Activated CD4-positive, alpha-beta T cell treated with anti-CD3 and anti-CD28 coated beads for 36 hours (primary cell): ENCODE measurements at regions of chr4 and their contacts with region 1.

Region 1: GRCh38 chr4:56445699-56446098 is 9.6 kb downstream of the PAICS start:
- DNase-seq: no peak
- ATAC-seq: no peak
- H3K4me3 Mint-ChIP-seq: no peak overlapping the region
- H3K27ac Mint-ChIP-seq: no peak overlapping the region
- H3K4me1 Mint-ChIP-seq: peaks cover 37% of the 10 kb centered on the region
- H3K27me3 Mint-ChIP-seq: no peaks in the 10 kb centered on the region

Region 2: DNA sequence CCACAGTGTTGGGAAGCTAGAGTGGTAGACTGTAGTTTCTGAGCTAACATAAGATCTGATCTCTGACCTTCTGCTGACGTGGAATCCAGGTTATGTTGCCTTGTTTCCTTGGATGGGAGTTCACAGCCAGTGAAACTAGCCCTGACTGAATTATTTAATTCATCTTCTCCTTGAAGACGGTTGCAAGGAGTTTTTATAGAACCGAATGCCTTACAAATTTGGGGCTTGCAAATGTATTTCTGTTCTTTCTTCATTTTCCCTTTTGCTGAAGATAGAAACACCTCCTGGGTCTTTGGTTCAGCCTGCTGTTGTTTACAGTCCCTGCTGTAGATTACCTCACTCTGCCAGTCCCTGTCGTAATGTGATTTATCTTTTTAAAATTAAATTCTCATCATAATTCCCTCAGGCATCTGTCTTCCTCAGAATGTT is 383.1 kb before region 1 on chr4:
- CTCF ChIA-PET with region 1: no interaction called
- POLR2A ChIA-PET with region 1: no interaction called
- intact Hi-C with region 1: no loop called
- DNase-seq: no peak
- ATAC-seq: no peak
- H3K4me3 Mint-ChIP-seq: no peak overlapping the region
- H3K27ac Mint-ChIP-seq: no peak overlapping the region
- H3K4me1 Mint-ChIP-seq: no peaks in the 10 kb centered on the region
- H3K27me3 Mint-ChIP-seq: peaks cover 16% of the 10 kb centered on the region

Region 3: DNA sequence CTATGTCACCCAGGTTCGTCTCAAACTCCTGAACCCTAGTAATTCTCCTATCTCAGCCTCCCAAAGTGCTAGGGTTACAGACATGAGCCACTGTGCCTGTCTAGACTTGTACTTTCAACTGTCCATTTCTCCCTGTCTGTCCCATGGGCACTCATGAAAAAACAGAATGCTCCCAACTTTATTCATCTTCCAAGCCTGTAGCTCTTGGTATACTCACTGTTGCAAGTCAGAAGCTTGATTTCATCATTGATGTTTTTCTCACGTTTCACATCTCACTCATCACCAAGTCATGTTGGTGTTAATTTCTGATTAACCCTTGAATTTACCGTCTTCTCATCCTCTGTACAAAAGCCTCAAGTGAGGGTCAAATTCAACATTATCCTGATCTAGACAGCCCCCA is 14.4 kb after region 1 on chr4:
- CTCF ChIA-PET with region 1: interaction called, 10 read pairs
- POLR2A ChIA-PET with region 1: interaction called, 3 read pairs
- intact Hi-C with region 1: no loop called
- DNase-seq: no peak
- ATAC-seq: no peak
- H3K4me3 Mint-ChIP-seq: no peak overlapping the region
- H3K27ac Mint-ChIP-seq: peak overlapping the region; percentile 93
- H3K4me1 Mint-ChIP-seq: peaks cover 37% of the 10 kb centered on the region
- H3K27me3 Mint-ChIP-seq: no peaks in the 10 kb centered on the region

Region 4: GRCh38 chr4:56480691-56481090 is 35.0 kb after region 1 on chr4:
- CTCF ChIA-PET with region 1: no interaction called
- POLR2A ChIA-PET with region 1: no interaction called
- intact Hi-C with region 1: loop called in 1 of 2 experiments (anchors 5 kb)
- DNase-seq: no peak
- ATAC-seq: no peak
- H3K4me3 Mint-ChIP-seq: no peak overlapping the region
- H3K27ac Mint-ChIP-seq: no peak overlapping the region
- H3K4me1 Mint-ChIP-seq: no peaks in the 10 kb centered on the region
- H3K27me3 Mint-ChIP-seq: no peaks in the 10 kb centered on the region